Activated CD8-positive, alpha-beta T cell treated with anti-CD3 and anti-CD28 coated beads, Interleukin-2, amount 10 ng/mL, durations not matched to agents 7 days and 5 days (primary cell): ENCODE measurements at regions of chr11 and their contacts with region 1.

Region 1: GRCh38 chr11:128776424-128777284 is 82.8 kb downstream of the FLI1 start:
- DNase-seq: peak; percentile 38
- ATAC-seq: peak; percentile 52
- H3K4me3 Mint-ChIP-seq: no peak overlapping the region
- H3K27ac Mint-ChIP-seq: peak overlapping the region; percentile 45
- H3K4me1 Mint-ChIP-seq: peaks cover 43% of the 10 kb centered on the region
- H3K27me3 Mint-ChIP-seq: no peaks in the 10 kb centered on the region

Region 2: GRCh38 chr11:128733440-128734102 is 43.1 kb before region 1 on chr11:
- CTCF ChIA-PET with region 1: interaction called, 14 read pairs
- POLR2A ChIA-PET with region 1: no interaction called
- DNase-seq: peak; percentile 51
- ATAC-seq: peak; percentile 53
- H3K4me3 Mint-ChIP-seq: peak overlapping the region; percentile 61
- H3K27ac Mint-ChIP-seq: peak overlapping the region; percentile 78
- H3K4me1 Mint-ChIP-seq: peaks cover 98% of the 10 kb centered on the region
- H3K27me3 Mint-ChIP-seq: no peaks in the 10 kb centered on the region

Region 3: GRCh38 chr11:129323896-129324512 is 547.4 kb after region 1 on chr11:
- CTCF ChIA-PET with region 1: no interaction called
- POLR2A ChIA-PET with region 1: no interaction called
- DNase-seq: no peak
- ATAC-seq: no peak
- H3K4me3 Mint-ChIP-seq: no peak overlapping the region
- H3K27ac Mint-ChIP-seq: no peak overlapping the region
- H3K4me1 Mint-ChIP-seq: no peaks in the 10 kb centered on the region
- H3K27me3 Mint-ChIP-seq: peaks cover 6% of the 10 kb centered on the region